ENCODE measurements at regions of chr2 and their contacts with region 1.

Region 1: DNA sequence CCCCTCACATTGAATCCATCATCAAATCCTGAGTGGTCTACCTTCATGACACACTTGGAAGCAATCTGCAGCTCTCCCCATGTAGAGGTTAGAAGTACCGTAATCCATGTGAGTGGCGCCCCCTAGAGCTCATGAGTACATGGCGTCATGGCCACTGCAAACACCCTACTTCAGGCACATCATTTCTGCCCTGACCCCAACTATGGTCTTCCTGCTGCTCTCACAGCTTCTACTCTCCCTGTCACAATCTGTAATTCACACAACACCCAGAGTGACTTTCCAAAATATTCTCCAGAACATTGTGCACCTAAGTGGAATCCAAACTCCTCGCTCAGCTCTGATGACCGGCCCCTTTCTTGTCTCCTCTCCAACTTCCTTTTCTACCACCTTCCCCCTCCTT is 141.9 kb downstream of the ANKRD44 start:
- DNase-seq: peak; percentile 90
- H3K4me3 Mint-ChIP-seq: no peak overlapping the region
- H3K27ac Mint-ChIP-seq: peak overlapping the region; percentile 73
- H3K4me1 Mint-ChIP-seq: peaks cover 60% of the 10 kb centered on the region
- H3K27me3 Mint-ChIP-seq: no peaks in the 10 kb centered on the region

Region 2: DNA sequence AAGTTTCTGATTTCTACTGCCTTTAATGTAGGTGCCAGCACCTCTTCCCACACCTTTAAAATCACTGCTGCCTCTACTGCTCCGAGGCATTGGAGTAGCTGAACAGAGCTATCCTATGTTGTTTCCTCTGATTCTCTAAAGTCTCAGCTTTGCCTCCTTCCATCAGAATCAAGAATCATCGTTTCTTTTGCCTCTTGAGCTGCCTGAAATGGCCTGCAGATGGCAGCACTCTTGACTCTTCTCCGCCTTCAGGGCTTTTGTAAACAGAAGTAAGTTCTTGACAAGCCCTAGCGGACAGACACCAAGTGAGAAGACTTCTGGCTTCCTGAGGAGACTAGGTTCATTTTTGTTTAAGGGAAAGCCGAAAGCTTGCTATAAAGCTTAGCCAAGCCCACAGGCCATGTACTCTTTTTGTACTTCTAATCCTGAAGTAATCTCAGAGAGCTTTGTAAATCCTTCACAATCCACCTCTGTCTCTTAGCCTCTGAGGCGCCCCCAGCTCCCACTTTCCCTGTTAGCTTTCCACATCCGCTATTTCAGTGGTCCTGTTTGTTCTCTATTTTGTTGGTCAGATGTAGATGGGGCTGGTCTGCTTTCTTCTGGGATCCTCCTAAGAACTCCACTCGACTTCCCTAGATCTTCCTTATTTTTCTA is 417.6 kb before region 1 on chr2:
- CTCF ChIA-PET with region 1: no interaction called
- intact Hi-C with region 1: loop called (anchors 2 kb)
- DNase-seq: peak; percentile 83
- H3K4me3 Mint-ChIP-seq: no peak overlapping the region
- H3K27ac Mint-ChIP-seq: no peak overlapping the region
- H3K4me1 Mint-ChIP-seq: peaks cover 9% of the 10 kb centered on the region
- H3K27me3 Mint-ChIP-seq: no peaks in the 10 kb centered on the region

Region 3: DNA sequence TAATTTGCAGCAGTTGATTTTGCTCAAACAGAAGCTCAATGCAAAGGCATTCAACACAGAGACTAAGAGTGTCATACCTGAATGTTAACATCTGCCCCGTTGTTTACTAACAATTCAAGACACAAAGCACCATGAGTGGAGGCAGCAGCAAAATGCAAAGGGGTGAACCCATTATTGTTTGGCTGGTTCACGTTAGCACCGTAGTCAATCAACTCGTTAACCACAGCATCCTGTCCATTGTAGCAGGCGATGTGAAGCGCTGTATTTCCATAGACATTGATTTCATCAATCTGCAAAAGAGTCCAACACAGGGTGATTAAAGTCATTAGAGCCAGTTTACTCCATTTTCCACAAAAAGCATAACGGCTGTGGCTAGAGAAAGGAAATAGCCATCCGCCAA is 47.5 kb before region 1 on chr2:
- CTCF ChIA-PET with region 1: interaction called, 19 read pairs
- intact Hi-C with region 1: no loop called
- DNase-seq: peak; percentile 14
- H3K4me3 Mint-ChIP-seq: no peak overlapping the region
- H3K27ac Mint-ChIP-seq: peak overlapping the region; percentile 32
- H3K4me1 Mint-ChIP-seq: peaks cover 47% of the 10 kb centered on the region
- H3K27me3 Mint-ChIP-seq: no peaks in the 10 kb centered on the region

Region 4: GRCh38 chr2:197137231-197137630 is 31.5 kb before region 1 on chr2:
- CTCF ChIA-PET with region 1: interaction called, 25 read pairs
- intact Hi-C with region 1: loop called (anchors 5 kb)
- DNase-seq: peak; percentile 55
- H3K4me3 Mint-ChIP-seq: no peak overlapping the region
- H3K27ac Mint-ChIP-seq: peak overlapping the region; percentile 73
- H3K4me1 Mint-ChIP-seq: peaks cover 85% of the 10 kb centered on the region
- H3K27me3 Mint-ChIP-seq: no peaks in the 10 kb centered on the region

Region 5: DNA sequence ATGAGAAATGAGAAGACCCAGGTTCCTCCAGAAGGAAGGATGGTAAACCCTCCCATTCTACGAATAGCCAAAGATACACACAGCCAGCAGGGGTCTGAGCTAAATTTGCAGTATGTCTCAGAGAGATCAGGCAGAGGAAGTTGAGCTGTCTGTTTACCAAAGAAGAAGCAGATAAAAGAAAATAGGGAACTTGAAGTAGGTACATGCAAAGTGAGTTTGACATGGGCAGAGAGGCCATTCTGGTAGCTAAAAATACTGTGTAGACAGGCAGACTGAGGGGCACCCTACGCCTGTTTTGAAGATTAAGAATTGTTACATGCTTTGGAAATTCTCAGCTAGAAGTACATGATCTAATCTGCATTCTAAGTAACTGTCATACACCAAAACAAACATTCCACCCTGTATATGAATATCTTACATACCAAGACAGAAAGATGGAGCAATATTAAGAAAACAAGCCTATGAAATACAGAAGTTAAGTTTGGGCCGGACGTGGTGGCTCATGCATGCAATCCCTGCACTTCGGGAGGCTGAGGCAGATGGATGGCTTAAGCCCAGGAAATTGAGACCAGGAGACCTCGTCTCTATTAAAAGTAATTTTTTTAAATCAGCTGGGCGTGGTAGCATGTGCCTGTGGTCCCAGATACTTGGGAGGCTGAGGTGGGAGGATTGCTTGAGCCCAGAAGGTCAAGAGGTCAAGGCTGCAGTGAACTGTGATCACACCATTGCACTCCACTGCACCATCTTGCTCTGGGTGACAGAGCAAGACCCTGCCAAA is 16.1 kb before region 1 on chr2:
- CTCF ChIA-PET with region 1: interaction called, 17 read pairs
- intact Hi-C with region 1: no loop called
- DNase-seq: peak; percentile 26
- H3K4me3 Mint-ChIP-seq: peak overlapping the region; percentile 47
- H3K27ac Mint-ChIP-seq: peak overlapping the region; percentile 60
- H3K4me1 Mint-ChIP-seq: peaks cover 80% of the 10 kb centered on the region
- H3K27me3 Mint-ChIP-seq: no peaks in the 10 kb centered on the region

Region 6: DNA sequence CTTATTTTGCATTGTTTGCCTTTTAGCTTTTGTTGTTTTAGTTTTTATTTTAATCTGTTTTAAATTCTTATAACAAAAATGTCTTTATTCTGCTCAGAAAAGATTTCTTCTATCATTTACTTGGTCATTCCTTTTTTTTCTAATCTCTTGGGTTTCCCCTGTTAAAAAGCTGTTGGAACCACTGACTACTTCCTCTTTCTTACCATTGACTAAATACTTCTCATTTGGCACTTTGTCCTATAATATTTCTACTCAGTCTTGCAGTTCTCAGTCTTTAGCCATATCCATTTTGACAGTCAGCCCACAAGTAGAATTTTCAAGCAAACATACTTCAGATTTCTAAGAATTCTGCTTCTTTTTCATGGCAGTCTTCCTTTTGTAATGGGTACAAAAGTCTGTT is 1721.8 kb after region 1 on chr2:
- CTCF ChIA-PET with region 1: no interaction called
- intact Hi-C with region 1: no loop called
- DNase-seq: no peak
- H3K4me3 Mint-ChIP-seq: no peak overlapping the region
- H3K27ac Mint-ChIP-seq: no peak overlapping the region
- H3K4me1 Mint-ChIP-seq: no peaks in the 10 kb centered on the region
- H3K27me3 Mint-ChIP-seq: no peaks in the 10 kb centered on the region

Measured in activated naive CD4-positive, alpha-beta T cell treated with anti-CD3 and anti-CD28 coated beads for 36 hours (primary cell).